ENCODE measurements at regions of chr6 and their contacts with region 1.

Region 1: GRCh38 chr6:83615025-83615999 is 93.6 kb downstream of the SNAP91 start:
- DNase-seq: no peak
- ATAC-seq: no peak
- H3K4me3 Mint-ChIP-seq: no peak overlapping the region
- H3K27ac Mint-ChIP-seq: no peak overlapping the region
- H3K4me1 Mint-ChIP-seq: no peaks in the 10 kb centered on the region
- H3K27me3 Mint-ChIP-seq: no peaks in the 10 kb centered on the region
- CTCF ChIP-seq: no peak

Region 2: DNA sequence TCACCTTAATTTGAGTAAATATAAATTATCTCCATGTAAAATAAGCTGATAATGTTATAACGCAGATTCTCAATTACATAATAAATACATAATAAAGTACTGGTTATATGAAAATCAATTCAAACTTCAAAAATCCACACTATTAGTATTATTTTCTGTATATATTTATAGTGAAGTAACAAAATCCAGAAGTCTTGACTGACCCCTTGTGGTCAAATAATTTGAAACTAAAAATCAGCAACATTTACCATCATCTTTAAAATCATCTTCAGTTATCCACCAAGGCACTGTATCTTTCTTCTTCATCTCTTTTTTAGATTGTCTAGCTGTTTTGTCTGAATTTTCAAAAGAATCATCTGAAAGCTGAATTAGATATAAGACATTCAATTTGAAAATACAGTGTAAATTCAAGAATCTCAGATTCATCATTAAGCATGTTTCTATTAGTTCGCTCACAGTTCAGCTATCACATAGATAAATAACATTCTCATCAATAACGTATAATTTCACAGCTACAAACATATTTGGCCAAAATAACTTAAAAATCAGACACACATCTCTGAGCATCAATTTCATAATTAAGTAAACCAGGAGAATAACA is 605.6 kb after region 1 on chr6:
- CTCF ChIA-PET with region 1: interaction called, 15 read pairs
- POLR2A ChIA-PET with region 1: no interaction called
- intact Hi-C with region 1: loop called (anchors 1 kb)
- DNase-seq: no peak
- ATAC-seq: no peak
- H3K4me3 Mint-ChIP-seq: no peak overlapping the region
- H3K27ac Mint-ChIP-seq: no peak overlapping the region
- H3K4me1 Mint-ChIP-seq: peaks cover 5% of the 10 kb centered on the region
- H3K27me3 Mint-ChIP-seq: no peaks in the 10 kb centered on the region
- CTCF ChIP-seq: peak; percentile 35

Region 3: GRCh38 chr6:85323435-85324040 is 1708.2 kb after region 1 on chr6:
- CTCF ChIA-PET with region 1: interaction called, 26 read pairs
- POLR2A ChIA-PET with region 1: no interaction called
- intact Hi-C with region 1: loop called (anchors 1 kb)
- DNase-seq: peak; percentile 20
- ATAC-seq: no peak
- H3K4me3 Mint-ChIP-seq: no peak overlapping the region
- H3K27ac Mint-ChIP-seq: no peak overlapping the region
- H3K4me1 Mint-ChIP-seq: no peaks in the 10 kb centered on the region
- H3K27me3 Mint-ChIP-seq: peaks cover 9% of the 10 kb centered on the region
- CTCF ChIP-seq: no peak